ENCODE measurements at regions of chr10 and their contacts with region 1.

Region 1: GRCh38 chr10:69453803-69454202 is 2.5 kb downstream of the TSPAN15 start:
- DNase-seq: no peak
- ATAC-seq: no peak
- H3K4me3 ChIP-seq: no peak overlapping the region
- H3K27ac ChIP-seq: no peak overlapping the region
- H3K4me1 ChIP-seq: no peaks in the 10 kb centered on the region; the same call in none of the 2 replicates
- H3K27me3 ChIP-seq: peaks cover 16% of the 10 kb centered on the region
- CTCF ChIP-seq: no peak
- POLR2A ChIP-seq: no peak
- RAD21 ChIP-seq: no peak

Region 2: GRCh38 chr10:69491611-69492010 is 37.8 kb after region 1 on chr10:
- CTCF ChIA-PET with region 1: no interaction called
- POLR2A ChIA-PET with region 1: no interaction called
- dilution Hi-C with region 1: no loop called
- in situ Hi-C with region 1: no loop called
- intact Hi-C with region 1: loop called (anchors 2 kb)
- DNase-seq: no peak
- ATAC-seq: no peak
- H3K4me3 ChIP-seq: no peak overlapping the region
- H3K27ac ChIP-seq: no peak overlapping the region
- H3K4me1 ChIP-seq: no peaks in the 10 kb centered on the region; the same call in 1 of the 2 replicates
- H3K27me3 ChIP-seq: peaks cover 41% of the 10 kb centered on the region; the same call in 1 of the 2 replicates
- CTCF ChIP-seq: no peak
- POLR2A ChIP-seq: no peak
- RAD21 ChIP-seq: no peak

Region 3: GRCh38 chr10:69728335-69728870 is 274.6 kb after region 1 on chr10:
- CTCF ChIA-PET with region 1: no interaction called
- POLR2A ChIA-PET with region 1: no interaction called
- dilution Hi-C with region 1: no loop called
- in situ Hi-C with region 1: no loop called
- intact Hi-C with region 1: no loop called
- DNase-seq: peak; percentile 80
- ATAC-seq: no peak
- H3K4me3 ChIP-seq: no peak overlapping the region
- H3K27ac ChIP-seq: 0 out of 2 replicates have a peak overlapping the region, but pooled peaks have one; percentile 6
- H3K4me1 ChIP-seq: peaks cover 39% of the 10 kb centered on the region
- H3K27me3 ChIP-seq: no peaks in the 10 kb centered on the region; the same call in 1 of the 2 replicates
- CTCF ChIP-seq: no peak
- POLR2A ChIP-seq: no peak
- RAD21 ChIP-seq: no peak